ENCODE measurements at regions of chr5 and their contacts with region 1.

Region 1: DNA sequence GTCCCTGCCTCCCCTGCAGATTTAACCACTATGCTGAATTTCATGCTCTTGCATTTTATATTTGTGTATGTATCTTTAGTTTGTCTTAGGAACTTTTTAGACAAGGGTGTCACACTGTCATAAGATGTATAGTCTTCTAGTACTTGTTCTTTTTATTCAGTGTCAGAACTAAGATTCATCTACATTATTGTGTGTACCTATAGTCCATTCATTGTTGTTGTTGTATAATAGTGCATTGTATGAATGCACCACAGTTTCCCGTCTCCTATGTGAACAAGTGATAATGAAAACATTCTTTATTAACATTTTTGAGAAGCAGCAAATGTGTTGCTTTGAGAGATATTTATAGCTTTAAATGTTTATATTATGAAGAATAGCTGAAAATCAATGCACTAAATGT is 45.9 kb downstream of the SFXN1 start:
- DNase-seq: no peak
- ATAC-seq: no peak
- H3K4me3 ChIP-seq: no peak overlapping the region
- H3K27ac ChIP-seq: no peak overlapping the region
- H3K4me1 ChIP-seq: no peaks in the 10 kb centered on the region
- H3K27me3 ChIP-seq: no peaks in the 10 kb centered on the region
- CTCF ChIP-seq: no peak
- POLR2A ChIP-seq: no peak
- RAD21 ChIP-seq: no peak

Region 2: DNA sequence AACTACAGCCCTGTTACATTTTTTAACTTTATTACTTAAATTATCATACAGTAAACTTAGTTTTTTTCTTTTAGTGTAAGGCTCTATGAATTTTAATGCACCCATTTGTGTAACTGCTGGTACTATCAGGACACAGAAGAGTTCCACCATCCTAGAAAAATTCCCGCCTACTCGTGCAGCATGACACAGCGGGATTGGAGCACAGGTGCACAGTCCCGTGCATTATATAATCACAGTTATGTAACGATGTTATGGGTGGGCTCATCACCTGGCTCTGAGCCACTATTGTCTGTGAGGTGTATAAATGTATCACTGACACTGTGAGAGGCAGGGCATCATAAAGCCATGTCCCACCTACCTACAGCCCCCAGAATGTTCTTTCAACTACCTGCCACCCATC is 160.9 kb before region 1 on chr5:
- CTCF ChIA-PET with region 1: no interaction called
- POLR2A ChIA-PET with region 1: no interaction called
- dilution Hi-C with region 1: no loop called
- in situ Hi-C with region 1: no loop called
- intact Hi-C with region 1: no loop called
- DNase-seq: no peak
- ATAC-seq: no peak
- H3K4me3 ChIP-seq: no peak overlapping the region
- H3K27ac ChIP-seq: no peak overlapping the region
- H3K4me1 ChIP-seq: no peaks in the 10 kb centered on the region
- H3K27me3 ChIP-seq: no peaks in the 10 kb centered on the region
- CTCF ChIP-seq: no peak
- POLR2A ChIP-seq: no peak
- RAD21 ChIP-seq: no peak

Region 3: GRCh38 chr5:175534070-175534932 is 10.1 kb after region 1 on chr5:
- CTCF ChIA-PET with region 1: interaction called, 16 read pairs
- POLR2A ChIA-PET with region 1: no interaction called
- dilution Hi-C with region 1: no loop called
- in situ Hi-C with region 1: no loop called
- intact Hi-C with region 1: no loop called
- DNase-seq: peak; percentile 77
- ATAC-seq: peak; percentile 99
- H3K4me3 ChIP-seq: no peak overlapping the region
- H3K27ac ChIP-seq: no peak overlapping the region
- H3K4me1 ChIP-seq: no peaks in the 10 kb centered on the region
- H3K27me3 ChIP-seq: 0 out of 2 replicates have a peak, but pooled peaks cover 2% of the 10 kb centered on the region
- CTCF ChIP-seq: peak; percentile 99
- POLR2A ChIP-seq: no peak
- RAD21 ChIP-seq: peak; percentile 83

Region 4: DNA sequence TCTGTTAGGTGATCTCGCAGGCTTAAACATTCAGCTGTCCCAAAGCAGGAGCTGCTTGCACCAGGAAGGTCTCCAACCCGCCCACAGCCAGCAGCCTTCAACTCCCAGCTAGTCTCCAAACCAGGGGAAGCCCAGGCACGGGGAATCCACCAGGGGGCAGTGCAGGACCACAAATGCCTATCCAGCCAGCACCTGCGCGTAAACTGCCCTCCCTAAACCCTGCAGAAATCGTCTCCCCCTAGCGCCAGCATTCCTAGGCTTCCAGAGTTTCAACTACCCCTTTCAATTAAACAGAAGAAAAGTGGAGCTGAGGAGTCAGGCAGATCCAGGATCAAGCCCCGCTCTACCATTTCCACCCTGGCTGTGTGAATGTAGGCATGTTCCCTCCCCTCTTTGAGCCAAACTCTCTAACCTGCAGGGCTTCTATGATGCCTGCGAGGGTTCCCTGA is 205.6 kb after region 1 on chr5:
- CTCF ChIA-PET with region 1: no interaction called
- POLR2A ChIA-PET with region 1: no interaction called
- dilution Hi-C with region 1: no loop called
- in situ Hi-C with region 1: no loop called
- intact Hi-C with region 1: no loop called
- DNase-seq: peak; percentile 85
- ATAC-seq: peak; percentile 99
- H3K4me3 ChIP-seq: no peak overlapping the region
- H3K27ac ChIP-seq: no peak overlapping the region
- H3K4me1 ChIP-seq: no peaks in the 10 kb centered on the region
- H3K27me3 ChIP-seq: no peaks in the 10 kb centered on the region; the same call in 1 of the 2 replicates
- CTCF ChIP-seq: peak; percentile 99
- POLR2A ChIP-seq: peak; percentile 60
- RAD21 ChIP-seq: peak; percentile 100